PC-3 (cell line): ENCODE measurements at regions of chr12 and their contacts with region 1.

Region 1: DNA sequence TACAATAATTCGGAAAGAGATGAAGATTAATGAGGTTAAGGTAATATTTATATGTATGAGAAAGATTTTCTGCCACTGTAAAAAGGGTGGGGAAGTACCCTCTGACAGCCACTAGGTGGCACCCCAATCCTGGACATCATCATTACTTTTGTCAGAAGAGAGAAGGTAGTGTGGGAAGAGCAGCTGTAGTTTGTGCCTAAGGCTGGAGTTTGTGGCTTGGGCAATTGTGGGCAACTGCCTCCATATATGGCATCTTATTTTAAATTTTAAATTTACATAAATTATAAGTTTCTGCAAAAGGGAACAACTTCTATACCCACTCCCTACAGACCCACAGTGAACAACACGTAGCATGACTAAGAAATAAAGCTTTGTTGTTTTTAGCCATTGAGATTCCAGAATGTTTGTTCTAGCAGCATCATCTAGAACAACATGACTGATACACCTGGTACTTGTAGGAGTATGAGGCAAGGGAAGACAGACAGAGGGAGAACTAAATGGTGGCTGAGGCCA is 34.4 kb upstream of the SYCP3 start:
- DNase-seq: peak; percentile 81
- ATAC-seq: peak; percentile 84
- H3K4me3 ChIP-seq: no peak overlapping the region
- H3K27ac ChIP-seq: no peak overlapping the region
- H3K4me1 ChIP-seq: no peaks in the 10 kb centered on the region
- H3K27me3 ChIP-seq: no peaks in the 10 kb centered on the region
- CTCF ChIP-seq: peak; percentile 95

Region 2: DNA sequence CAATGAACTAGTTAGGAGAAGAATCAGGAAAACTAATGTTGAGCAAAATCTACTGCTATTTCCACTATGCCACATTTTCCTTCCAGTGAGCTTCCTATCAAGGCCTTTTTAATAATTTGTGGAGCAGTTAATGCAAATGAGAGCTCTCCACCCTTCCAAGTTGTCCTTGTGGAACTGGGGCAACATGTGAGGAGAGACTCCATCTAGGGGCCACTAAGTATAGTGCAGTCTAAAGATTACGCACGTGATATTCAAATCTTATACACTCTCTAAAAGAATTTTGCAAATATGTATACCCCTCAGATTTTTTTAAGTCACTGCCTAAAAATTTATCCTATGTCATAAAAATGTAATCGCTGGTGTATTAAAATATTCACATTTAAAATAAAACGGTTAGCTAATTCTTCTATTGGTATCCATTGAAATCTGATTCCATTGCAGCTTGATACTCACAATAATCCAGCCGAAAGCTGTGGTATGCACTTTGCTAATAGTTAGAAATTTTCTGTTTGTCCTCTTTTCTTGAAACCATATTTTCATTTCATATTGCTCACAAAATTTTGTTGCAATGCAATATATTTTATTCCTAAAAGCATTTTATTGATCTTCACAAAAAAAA is 1043.2 kb after region 1 on chr12:
- CTCF ChIA-PET with region 1: no interaction called
- POLR2A ChIA-PET with region 1: no interaction called
- intact Hi-C with region 1: loop called (anchors 10 kb)
- DNase-seq: peak; percentile 51
- ATAC-seq: no peak; the same call in 1 of the 2 replicates
- H3K4me3 ChIP-seq: no peak overlapping the region
- H3K27ac ChIP-seq: no peak overlapping the region
- H3K4me1 ChIP-seq: no peaks in the 10 kb centered on the region
- H3K27me3 ChIP-seq: peaks cover 3% of the 10 kb centered on the region
- CTCF ChIP-seq: peak; percentile 70